ENCODE measurements at regions of chr13 and their contacts with region 1.

Region 1: DNA sequence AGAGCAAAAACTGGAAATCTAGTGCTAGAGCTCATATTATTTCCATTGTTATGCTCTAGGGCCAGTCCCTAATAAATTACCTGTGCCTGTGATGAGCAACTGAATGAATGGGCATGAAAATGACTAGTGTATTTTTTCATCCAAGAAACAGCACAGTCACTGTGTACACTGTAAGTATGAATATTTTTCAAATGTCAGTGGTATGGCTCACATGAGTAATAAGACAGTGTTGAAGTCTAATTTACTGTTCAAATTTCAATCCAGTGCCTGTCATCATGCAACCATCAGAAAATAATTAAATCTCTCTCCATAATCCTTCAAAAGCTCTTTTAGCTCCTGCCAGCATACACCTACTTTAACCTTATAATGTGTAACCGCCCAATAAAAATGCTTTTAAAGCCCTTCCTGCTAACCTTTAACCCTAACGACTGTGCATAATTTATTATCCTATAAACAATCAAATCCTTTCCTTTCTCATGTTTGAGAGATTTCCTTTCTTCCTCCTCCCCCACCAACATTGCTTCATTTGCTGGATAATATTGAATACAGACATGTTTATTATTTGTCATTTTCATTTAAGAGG is 378.3 kb downstream of the GPC5 start:
- DNase-seq: no peak
- ATAC-seq: no peak

Region 2: DNA sequence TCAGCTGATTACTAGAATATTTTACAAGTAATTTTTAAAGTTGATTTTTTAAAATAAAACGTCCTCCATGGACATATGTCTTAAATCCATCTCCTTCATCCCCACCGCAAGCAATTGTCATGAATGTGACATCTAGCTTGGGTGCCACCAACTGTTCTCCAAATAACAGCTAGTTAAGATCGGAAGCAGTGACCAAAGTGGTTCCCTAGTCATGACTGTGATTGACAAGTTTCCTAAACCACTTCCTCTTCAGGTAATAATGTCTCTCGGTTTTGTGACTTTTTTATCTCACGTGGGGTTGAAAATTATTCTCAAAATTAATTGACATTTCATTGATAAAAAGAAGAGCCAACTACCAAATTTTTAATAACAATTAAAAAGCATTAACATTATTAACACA is 564.5 kb before region 1 on chr13:
- intact Hi-C with region 1: no loop called
- DNase-seq: no peak
- ATAC-seq: no peak

Region 3: DNA sequence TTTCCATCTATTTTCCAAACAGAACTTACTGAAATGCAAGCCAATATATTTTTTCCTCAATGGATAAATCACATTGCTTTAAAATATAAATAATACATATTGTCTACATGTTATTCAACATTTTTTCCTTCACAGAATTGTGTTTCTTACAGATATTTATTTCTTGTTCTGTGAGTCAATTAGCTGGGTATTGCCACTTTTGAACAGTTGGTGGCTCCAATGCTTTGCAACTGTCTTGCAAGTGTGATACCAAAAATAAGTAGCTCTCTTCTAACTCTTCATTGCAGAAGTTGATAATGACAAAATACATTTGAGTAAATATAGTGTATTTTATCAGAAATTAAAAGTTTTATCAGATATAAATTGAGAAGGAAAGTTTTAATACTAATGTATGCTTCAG is 395.3 kb before region 1 on chr13:
- intact Hi-C with region 1: loop called (anchors 10 kb)
- DNase-seq: no peak
- ATAC-seq: no peak

Measured in Right ventricle myocardium superior (tissue), 1 donor.